Psoas muscle (tissue), 8 donors: ENCODE measurements at regions of chr6 and their contacts with region 1.

Region 1: DNA sequence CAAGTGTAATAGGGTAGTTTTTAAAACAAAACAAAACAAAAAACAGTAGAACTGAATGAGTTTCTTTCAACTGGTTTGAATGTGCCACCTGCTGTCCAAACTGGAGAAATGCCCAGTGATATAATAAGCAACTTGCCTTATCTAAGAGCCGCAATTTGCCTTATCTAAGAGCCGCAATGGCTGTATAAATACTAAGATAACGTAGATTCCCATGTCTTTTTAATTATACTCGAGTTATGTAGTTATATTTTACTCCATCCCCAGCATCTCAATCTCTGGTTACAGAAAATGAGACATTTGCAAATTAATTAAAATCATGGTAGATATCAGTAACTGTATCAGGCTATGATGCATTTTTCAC is 67.2 kb downstream of the RPP40 start:
- DNase-seq: no peak
- ATAC-seq: peak in 1 of 4 donors; percentile 74
- H3K4me3 ChIP-seq: no peak overlapping the region
- H3K27ac ChIP-seq: no peak overlapping the region
- H3K4me1 ChIP-seq: peaks cover 18% of the 10 kb centered on the region
- H3K27me3 ChIP-seq: no peaks in the 10 kb centered on the region
- CTCF ChIP-seq: peak; percentile 62

Region 2: GRCh38 chr6:4313044-4313686 is 623.5 kb before region 1 on chr6:
- intact Hi-C with region 1: loop called in 1 of 2 experiments (anchors 10 kb)
- DNase-seq: peak in 1 of 2 donors; percentile 35
- ATAC-seq: peak; percentile 31 to 66 (median 53)
- H3K4me3 ChIP-seq: no peak overlapping the region
- H3K27ac ChIP-seq: no peak overlapping the region
- H3K4me1 ChIP-seq: peaks cover 17% of the 10 kb centered on the region
- H3K27me3 ChIP-seq: no peaks in the 10 kb centered on the region
- CTCF ChIP-seq: peak; percentile 36

Region 3: DNA sequence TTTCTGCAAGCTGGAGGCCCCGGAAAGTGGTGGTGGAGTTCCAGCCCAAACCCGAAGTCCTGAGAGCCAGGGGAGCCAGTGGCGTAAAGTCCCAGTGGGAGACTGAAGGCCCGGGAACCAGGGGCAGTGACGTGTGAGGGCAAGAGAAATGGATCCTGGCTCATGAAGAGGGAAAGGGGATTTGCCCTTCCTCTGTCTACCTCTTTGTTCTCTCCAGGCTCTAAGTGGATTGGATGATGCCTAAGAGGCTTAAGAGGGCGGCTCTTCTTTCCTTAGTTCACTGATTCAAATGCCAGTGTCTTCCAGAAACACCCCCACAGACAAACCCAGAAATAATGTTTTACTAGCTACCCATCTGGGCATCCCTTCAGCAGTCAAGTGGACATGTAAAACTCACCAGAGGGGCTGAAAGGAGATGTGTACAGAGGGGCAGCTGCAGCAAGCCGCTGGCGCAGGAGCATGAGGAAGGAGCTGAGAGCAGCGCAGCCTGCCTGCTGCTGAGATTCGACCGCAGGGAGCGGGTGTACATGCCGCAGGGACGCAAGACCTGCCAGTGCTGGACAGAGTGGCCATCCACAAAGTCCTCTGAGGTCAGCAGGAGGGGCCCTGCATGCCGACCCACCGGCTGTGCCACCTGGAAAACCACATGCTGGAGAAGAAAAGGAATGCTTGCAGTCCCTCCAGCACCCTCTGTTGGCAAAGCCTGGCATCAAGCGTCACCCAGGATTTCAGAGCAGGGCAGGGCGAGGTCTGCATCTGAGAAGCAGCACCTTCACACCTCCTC is 130.9 kb before region 1 on chr6:
- intact Hi-C with region 1: loop called in 1 of 2 experiments (anchors 10 kb)
- DNase-seq: peak; percentile 34 to 70
- ATAC-seq: peak; percentile 85 to 89 (median 88)
- H3K4me3 ChIP-seq: no peak overlapping the region
- H3K27ac ChIP-seq: no peak overlapping the region
- H3K4me1 ChIP-seq: peaks cover 39% of the 10 kb centered on the region
- H3K27me3 ChIP-seq: no peaks in the 10 kb centered on the region
- CTCF ChIP-seq: peak; percentile 57